Mammary epithelial cell (primary cell): ENCODE measurements at regions of chr9 and their contacts with region 1.

Region 1: GRCh38 chr9:113737517-113738271 is 138.4 kb upstream of the ZNF618 start:
- DNase-seq: peak; percentile 57
- H3K4me3 ChIP-seq: no peak overlapping the region
- H3K27ac ChIP-seq: no peak overlapping the region
- H3K4me1 ChIP-seq: peaks cover 8% of the 10 kb centered on the region
- H3K27me3 ChIP-seq: no peaks in the 10 kb centered on the region
- CTCF ChIP-seq: peak; percentile 81 to 88

Region 2: GRCh38 chr9:113669522-113670115 is 68.1 kb before region 1 on chr9:
- CTCF ChIA-PET with region 1: no interaction called
- dilution Hi-C with region 1: no loop called
- in situ Hi-C with region 1: no loop called
- intact Hi-C with region 1: no loop called
- DNase-seq: no peak
- H3K4me3 ChIP-seq: no peak overlapping the region
- H3K27ac ChIP-seq: no peak overlapping the region
- H3K4me1 ChIP-seq: no peaks in the 10 kb centered on the region
- H3K27me3 ChIP-seq: no peaks in the 10 kb centered on the region
- CTCF ChIP-seq: no peak

Region 3: DNA sequence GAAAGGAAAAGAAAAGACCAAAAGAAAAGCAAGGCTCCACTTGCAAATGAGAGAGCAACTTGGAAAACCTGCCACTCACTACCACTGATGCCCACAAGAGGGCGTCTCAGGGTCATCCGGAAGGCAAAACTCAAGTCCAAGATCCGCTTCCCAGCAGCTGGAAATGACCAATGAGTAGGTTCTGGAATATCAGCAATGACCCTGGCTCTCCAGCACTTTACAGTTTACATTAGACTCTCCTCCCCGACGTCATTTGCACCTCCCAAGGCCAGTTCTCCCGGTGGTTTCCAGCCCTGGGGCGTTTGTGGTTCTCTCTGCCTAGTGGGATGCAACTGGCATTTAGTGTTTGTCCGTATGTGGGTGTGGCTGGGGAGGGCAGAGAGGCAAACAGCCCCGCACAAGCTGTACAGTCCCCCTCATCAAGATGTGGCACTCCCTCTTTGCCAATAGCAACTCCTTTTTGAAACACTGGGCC is 55.4 kb before region 1 on chr9:
- CTCF ChIA-PET with region 1: no interaction called
- dilution Hi-C with region 1: no loop called
- in situ Hi-C with region 1: no loop called
- intact Hi-C with region 1: loop called (anchors 1 kb)
- DNase-seq: peak; percentile 85
- H3K4me3 ChIP-seq: no peak overlapping the region
- H3K27ac ChIP-seq: no peak overlapping the region
- H3K4me1 ChIP-seq: peaks cover 16% of the 10 kb centered on the region
- H3K27me3 ChIP-seq: no peaks in the 10 kb centered on the region
- CTCF ChIP-seq: peak; percentile 93 to 95

Region 4: DNA sequence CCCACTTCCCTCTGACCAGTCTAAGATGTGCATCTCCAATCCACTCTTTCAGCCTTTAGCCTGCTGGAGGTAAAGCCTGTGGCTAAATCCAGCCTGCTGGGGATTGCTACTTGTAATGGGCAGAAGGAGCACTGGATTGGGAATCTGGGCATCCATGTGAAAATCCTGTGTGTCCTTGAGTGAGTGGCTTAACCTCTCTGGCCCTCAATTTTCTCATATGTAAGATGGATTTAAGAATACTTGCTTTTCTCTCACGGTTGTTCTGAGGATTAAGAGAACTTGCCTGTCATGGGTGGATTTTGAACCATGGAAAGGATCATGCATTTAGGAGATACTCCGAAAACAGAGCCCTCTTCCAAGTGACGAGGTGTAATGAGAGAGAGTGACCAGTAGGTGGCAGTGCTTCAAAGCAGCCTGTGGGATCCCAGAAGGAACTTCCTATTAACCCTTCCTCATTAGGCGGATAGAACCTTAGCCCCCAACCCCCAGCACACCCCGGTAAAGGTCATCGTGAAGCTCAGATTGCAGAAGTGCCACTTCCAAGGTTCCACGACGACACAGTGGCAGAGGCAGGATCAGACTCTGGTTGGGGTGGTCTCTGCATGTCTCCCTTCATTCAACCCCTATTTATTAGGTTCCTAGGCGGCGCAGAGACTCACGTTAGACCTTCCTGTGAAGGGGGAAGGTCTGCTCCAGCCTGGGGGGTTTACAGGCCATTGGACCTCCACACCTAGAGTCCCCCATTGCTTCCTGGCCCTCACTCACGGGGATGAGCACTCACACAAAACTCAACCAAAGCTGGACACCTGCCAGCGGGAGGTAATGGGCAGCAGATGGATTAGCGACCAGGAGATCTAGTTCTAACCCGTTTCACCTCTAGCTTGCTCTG is 69.7 kb after region 1 on chr9:
- CTCF ChIA-PET with region 1: no interaction called
- dilution Hi-C with region 1: no loop called
- in situ Hi-C with region 1: no loop called
- intact Hi-C with region 1: loop called (anchors 5 kb)
- DNase-seq: peak; percentile 43
- H3K4me3 ChIP-seq: no peak overlapping the region
- H3K27ac ChIP-seq: no peak overlapping the region
- H3K4me1 ChIP-seq: peaks cover 4% of the 10 kb centered on the region
- H3K27me3 ChIP-seq: peaks cover 1% of the 10 kb centered on the region
- CTCF ChIP-seq: peak; percentile 90 to 91

Region 5: DNA sequence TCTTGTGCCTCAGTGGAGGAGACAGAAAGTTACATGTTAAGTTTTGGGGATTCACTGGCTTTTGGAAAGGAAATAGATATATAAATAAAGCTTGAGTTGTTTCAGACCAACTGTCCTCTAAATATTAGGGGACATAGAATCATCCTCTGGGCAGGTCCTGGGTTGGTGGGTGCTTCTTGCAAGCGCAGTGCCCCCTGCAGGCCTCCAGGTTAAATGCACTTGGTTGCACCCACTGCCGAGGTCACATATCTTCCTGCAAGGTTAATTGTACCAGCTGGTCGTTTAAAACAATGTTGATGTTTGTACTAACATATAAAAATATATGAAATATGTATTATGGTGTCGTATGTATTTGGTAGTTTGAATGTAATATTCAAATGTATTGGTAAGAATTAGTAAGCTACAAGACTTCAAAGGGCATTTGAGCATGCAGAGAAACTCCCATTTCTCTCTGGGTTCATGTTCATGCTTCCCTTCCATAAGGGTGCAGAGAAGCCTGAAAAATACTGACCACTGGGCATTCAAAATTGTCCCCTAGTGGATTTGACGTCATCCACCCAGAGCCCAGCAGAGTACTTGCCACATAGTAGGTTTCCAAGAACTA is 225.4 kb after region 1 on chr9:
- CTCF ChIA-PET with region 1: no interaction called
- dilution Hi-C with region 1: no loop called
- in situ Hi-C with region 1: no loop called
- intact Hi-C with region 1: loop called (anchors 1 kb)
- DNase-seq: peak; percentile 21
- H3K4me3 ChIP-seq: no peak overlapping the region
- H3K27ac ChIP-seq: no peak overlapping the region
- H3K4me1 ChIP-seq: peaks cover 4% of the 10 kb centered on the region
- H3K27me3 ChIP-seq: no peaks in the 10 kb centered on the region
- CTCF ChIP-seq: peak; percentile 82 to 84

Region 6: GRCh38 chr9:113998525-113999255 is 261.0 kb after region 1 on chr9:
- CTCF ChIA-PET with region 1: no interaction called
- dilution Hi-C with region 1: no loop called
- in situ Hi-C with region 1: no loop called
- intact Hi-C with region 1: no loop called
- DNase-seq: no peak
- H3K4me3 ChIP-seq: no peak overlapping the region
- H3K27ac ChIP-seq: no peak overlapping the region
- H3K4me1 ChIP-seq: no peaks in the 10 kb centered on the region
- H3K27me3 ChIP-seq: no peaks in the 10 kb centered on the region
- CTCF ChIP-seq: peak in 1 of 2 donors; percentile 27

Region 7: DNA sequence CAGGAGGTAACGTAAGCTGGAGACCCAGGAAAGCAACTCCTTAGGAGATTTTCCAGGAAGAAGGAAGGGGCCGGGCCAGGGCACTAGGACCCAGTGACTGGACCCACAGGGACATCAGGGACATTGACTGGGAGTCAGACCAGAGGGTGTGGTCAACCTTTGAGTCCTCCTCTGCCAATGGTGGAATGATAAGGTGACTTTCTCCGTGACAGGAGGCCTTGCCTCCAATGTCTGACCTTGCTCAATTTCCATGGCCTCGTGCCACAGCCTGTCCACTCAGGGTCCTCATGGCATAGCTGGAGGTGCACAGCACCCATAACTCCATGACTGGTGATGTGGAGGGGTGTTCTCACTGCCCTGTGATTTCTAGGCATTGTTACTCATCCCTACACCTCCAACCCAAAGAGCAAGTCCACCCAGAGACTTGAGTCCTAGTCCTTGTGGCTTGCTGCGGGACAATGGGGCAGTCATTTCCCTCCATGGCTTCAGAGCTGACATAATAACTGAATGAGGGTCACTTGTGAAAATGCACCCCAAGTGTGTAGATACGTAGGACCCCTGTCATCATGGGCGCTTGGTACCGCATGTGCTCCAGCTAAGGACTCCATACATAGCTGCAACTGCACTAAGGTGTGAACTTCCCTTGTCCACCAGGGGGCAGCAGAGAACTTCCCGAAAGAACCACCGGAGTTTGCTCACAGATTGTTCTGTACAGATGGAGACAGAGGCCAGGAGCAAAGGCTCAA is 344.5 kb after region 1 on chr9:
- CTCF ChIA-PET with region 1: no interaction called
- dilution Hi-C with region 1: no loop called
- in situ Hi-C with region 1: no loop called
- intact Hi-C with region 1: loop called (anchors 1 kb)
- DNase-seq: peak; percentile 72
- H3K4me3 ChIP-seq: no peak overlapping the region
- H3K27ac ChIP-seq: no peak overlapping the region
- H3K4me1 ChIP-seq: no peaks in the 10 kb centered on the region
- H3K27me3 ChIP-seq: no peaks in the 10 kb centered on the region
- CTCF ChIP-seq: peak; percentile 91 to 92